Activated CD8-positive, alpha-beta T cell treated with anti-CD3 and anti-CD28 coated beads for 36 hours (primary cell): ENCODE measurements at regions of chr14 and their contacts with region 1.

Region 1: DNA sequence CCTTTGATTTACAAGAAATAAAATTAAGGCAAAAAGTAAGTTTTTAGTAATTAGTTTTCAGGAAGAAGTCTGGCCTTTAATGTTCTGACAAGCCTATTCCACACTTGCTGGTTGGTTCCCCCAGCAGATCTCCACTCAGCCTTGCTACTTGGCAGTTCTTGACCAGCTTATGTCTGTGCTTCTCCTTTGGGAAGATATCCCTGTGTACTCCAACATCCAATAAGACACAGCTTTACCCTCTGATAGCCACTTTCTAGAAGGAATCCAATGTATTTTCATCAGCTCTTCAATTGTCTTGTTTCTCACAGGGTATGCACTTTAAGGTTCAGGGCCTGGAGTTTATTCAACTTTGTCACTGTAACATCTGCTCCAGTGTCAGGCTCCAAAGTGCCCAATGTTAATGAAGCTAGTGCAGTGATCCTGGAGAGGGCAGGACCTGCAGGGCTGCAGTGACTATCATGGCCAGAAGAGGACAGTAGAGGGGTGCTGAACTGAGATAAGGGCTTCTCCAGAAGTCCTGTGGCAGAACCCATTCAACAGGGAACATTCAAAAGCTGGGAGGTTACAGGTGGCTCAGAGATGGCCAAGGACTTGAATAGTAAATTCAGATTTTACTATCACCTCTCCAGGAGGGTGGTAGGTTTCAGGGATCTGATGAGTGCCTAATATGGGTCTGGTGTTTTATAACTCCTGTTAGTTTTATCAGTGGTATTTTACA is 22.9 kb downstream of the JKAMP start:
- DNase-seq: peak; percentile 77
- ATAC-seq: peak; percentile 97
- H3K4me3 Mint-ChIP-seq: no peak overlapping the region
- H3K27ac Mint-ChIP-seq: no peak overlapping the region
- H3K4me1 Mint-ChIP-seq: peaks cover 8% of the 10 kb centered on the region
- H3K27me3 Mint-ChIP-seq: peaks cover 6% of the 10 kb centered on the region
- CTCF ChIP-seq: peak; percentile 83

Region 2: GRCh38 chr14:59306775-59307174 is 200.4 kb before region 1 on chr14:
- CTCF ChIA-PET with region 1: no interaction called
- POLR2A ChIA-PET with region 1: no interaction called
- intact Hi-C with region 1: no loop called
- DNase-seq: no peak
- ATAC-seq: no peak
- H3K4me3 Mint-ChIP-seq: no peak overlapping the region
- H3K27ac Mint-ChIP-seq: no peak overlapping the region
- H3K4me1 Mint-ChIP-seq: peaks cover 6% of the 10 kb centered on the region
- H3K27me3 Mint-ChIP-seq: no peaks in the 10 kb centered on the region
- CTCF ChIP-seq: no peak

Region 3: GRCh38 chr14:59483900-59484638 is 23.2 kb before region 1 on chr14 and contains the starts of genes JKAMP and L3HYPDH:
- CTCF ChIA-PET with region 1: interaction called, 11 read pairs
- POLR2A ChIA-PET with region 1: no interaction called
- intact Hi-C with region 1: no loop called
- DNase-seq: peak; percentile 98
- ATAC-seq: peak; percentile 96
- H3K4me3 Mint-ChIP-seq: peak within 1 kb of the TSS; percentile 88
- H3K27ac Mint-ChIP-seq: peak within 1 kb of the TSS; percentile 88
- H3K4me1 Mint-ChIP-seq: peaks cover 55% of the 10 kb centered on the region
- H3K27me3 Mint-ChIP-seq: no peaks in the 10 kb centered on the region
- CTCF ChIP-seq: peak; percentile 25
- total RNA-seq, gene JKAMP: 15.3 to 16.0 TPM
- total RNA-seq, gene L3HYPDH: 12.3 to 14.6 TPM

Region 4: GRCh38 chr14:59490756-59491155 is 16.5 kb before region 1 on chr14:
- CTCF ChIA-PET with region 1: interaction called, 13 read pairs
- POLR2A ChIA-PET with region 1: no interaction called
- intact Hi-C with region 1: no loop called
- DNase-seq: no peak
- ATAC-seq: peak; percentile 37
- H3K4me3 Mint-ChIP-seq: no peak overlapping the region
- H3K27ac Mint-ChIP-seq: no peak overlapping the region
- H3K4me1 Mint-ChIP-seq: peaks cover 34% of the 10 kb centered on the region
- H3K27me3 Mint-ChIP-seq: no peaks in the 10 kb centered on the region
- CTCF ChIP-seq: no peak

Region 5: DNA sequence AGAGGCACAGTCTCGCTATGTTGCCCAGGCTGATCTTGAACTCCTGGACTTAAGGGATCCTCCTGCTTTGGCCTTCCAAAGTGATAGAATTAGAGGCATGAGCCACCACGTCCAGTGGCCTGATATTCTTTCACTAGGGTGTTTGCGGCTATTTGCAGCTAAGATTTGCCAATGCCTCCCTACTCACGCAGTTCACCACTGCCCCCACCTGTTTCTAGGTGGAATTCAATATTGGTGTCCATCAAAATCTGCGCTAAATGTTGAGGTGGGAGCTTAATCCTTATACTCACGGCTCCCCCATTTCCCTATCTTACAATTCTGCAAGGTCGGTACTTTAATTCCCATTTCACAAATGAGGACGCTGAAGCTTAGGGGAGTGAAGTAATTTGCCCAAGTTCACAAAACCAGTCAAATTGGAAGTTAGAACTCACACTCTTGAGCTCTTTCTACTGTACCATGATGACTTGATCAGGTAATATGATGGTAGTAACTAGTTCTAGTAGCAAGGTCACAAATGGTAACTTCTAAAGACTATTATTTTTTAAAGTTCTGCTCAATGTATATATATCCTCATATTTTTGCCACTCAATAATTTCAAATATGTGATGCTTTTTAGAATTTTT is 390.6 kb after region 1 on chr14:
- CTCF ChIA-PET with region 1: interaction called, 11 read pairs
- POLR2A ChIA-PET with region 1: no interaction called
- intact Hi-C with region 1: no loop called
- DNase-seq: peak; percentile 26
- ATAC-seq: peak; percentile 39
- H3K4me3 Mint-ChIP-seq: no peak overlapping the region
- H3K27ac Mint-ChIP-seq: no peak overlapping the region
- H3K4me1 Mint-ChIP-seq: no peaks in the 10 kb centered on the region
- H3K27me3 Mint-ChIP-seq: peaks cover 10% of the 10 kb centered on the region
- CTCF ChIP-seq: no peak